ENCODE measurements at regions of chr9 and their contacts with region 1.

Region 1: DNA sequence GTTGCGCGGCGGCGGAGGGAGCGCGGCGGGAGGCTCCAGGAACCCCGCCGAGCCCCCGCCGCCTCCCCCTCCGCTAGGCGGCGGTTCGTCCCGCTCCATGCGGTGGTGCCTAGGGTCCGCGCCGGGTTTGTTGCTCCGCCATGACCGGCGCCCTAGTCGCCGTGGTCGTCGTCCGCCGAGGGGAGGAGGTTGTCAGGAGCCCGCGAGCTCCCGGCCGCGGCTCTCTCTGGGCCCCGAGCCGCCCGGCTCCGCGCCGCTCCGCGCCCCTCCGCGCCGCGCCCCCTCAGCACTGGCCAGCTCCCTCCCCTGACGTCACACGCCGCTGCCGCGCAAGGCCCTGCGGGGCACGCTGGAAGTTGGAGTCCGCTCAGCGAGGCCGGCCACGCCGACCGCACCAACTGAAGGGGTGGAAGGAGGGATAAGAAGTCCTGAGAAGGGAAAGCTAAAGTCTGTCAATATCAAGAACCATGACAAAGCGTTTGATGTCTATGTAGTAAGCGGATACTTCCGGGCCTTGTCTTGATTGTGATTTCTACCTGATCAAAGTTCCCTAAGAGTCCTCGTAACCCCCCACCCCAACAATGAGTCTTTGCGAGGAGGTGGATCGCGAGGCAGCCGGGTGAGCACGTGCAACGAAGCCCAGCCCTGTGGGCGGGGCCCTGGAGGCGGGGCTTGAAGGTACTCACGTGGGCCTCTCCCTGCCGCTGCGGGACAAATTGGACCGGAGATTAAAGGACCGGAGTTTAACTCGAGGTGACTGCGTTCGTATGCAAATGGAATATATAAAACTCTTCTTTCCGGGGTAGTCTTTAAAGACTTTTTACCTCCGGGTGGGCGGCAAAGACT is at the start of gene NR6A1:
- DNase-seq: peak; percentile 63
- H3K4me3 ChIP-seq: peak within 1 kb of the TSS; percentile 65
- CTCF ChIP-seq: peak; percentile 35

Region 2: GRCh38 chr9:124782661-124783574 is 11.7 kb after region 1 on chr9:
- CTCF ChIA-PET with region 1: interaction called, 88 read pairs
- POLR2A ChIA-PET with region 1: no interaction called
- DNase-seq: no peak
- H3K4me3 ChIP-seq: no peak overlapping the region
- CTCF ChIP-seq: no peak

Region 3: DNA sequence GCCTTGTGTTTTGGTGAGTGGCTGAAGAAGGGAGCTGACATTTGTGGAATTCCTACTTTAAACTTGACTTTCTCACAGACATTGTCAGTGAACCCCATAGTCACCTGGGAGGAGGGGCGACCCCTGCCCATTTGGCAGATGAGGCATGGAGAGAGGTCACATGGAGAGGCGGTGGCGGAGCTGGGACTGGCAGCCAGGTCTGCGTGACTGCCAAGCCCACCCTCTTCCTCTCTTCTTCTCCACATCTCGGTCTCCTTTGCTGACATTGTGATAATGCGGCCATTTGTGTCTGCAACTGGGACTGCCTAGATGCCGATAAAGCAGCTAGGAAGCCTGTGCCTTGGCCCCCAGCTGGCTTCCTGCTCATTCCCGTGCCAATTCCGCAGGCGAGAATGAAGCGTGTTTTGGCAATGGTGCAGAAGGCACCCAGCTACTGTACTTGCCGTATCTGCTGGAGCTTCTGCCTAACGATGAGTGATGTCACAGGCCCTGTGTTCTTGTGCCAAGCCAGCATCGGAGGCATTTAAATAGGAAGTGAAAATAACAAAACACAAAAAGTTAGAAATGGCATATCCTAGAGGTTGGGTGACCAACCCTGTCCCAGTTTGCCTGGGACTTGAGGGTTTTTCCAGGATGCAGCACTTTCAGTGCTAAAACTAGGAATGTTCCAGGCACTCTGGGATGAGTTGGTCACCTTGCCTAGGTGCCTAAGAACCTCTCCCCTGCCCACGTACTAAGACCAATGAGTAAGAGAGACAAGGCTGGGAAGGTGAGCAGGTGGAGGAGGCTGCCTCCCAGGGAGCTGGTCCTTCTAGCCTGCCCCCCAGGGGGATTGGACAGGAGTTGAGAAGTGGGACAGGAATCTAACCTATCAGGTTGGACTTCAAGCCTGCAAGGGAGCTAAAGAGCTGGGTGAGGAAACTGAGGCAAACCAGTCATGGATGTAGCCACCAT is 29.3 kb after region 1 on chr9:
- CTCF ChIA-PET with region 1: interaction called, 138 read pairs
- POLR2A ChIA-PET with region 1: no interaction called
- DNase-seq: no peak
- H3K4me3 ChIP-seq: no peak overlapping the region
- CTCF ChIP-seq: no peak

Region 4: GRCh38 chr9:124818431-124819281 is 47.4 kb after region 1 on chr9:
- CTCF ChIA-PET with region 1: interaction called, 85 read pairs
- POLR2A ChIA-PET with region 1: no interaction called
- DNase-seq: no peak
- H3K4me3 ChIP-seq: no peak overlapping the region
- CTCF ChIP-seq: no peak

Region 5: GRCh38 chr9:124884376-124884775 is 113.1 kb after region 1 on chr9:
- CTCF ChIA-PET with region 1: interaction called, 16 read pairs
- POLR2A ChIA-PET with region 1: no interaction called
- DNase-seq: no peak
- H3K4me3 ChIP-seq: no peak overlapping the region
- CTCF ChIP-seq: no peak

Region 6: DNA sequence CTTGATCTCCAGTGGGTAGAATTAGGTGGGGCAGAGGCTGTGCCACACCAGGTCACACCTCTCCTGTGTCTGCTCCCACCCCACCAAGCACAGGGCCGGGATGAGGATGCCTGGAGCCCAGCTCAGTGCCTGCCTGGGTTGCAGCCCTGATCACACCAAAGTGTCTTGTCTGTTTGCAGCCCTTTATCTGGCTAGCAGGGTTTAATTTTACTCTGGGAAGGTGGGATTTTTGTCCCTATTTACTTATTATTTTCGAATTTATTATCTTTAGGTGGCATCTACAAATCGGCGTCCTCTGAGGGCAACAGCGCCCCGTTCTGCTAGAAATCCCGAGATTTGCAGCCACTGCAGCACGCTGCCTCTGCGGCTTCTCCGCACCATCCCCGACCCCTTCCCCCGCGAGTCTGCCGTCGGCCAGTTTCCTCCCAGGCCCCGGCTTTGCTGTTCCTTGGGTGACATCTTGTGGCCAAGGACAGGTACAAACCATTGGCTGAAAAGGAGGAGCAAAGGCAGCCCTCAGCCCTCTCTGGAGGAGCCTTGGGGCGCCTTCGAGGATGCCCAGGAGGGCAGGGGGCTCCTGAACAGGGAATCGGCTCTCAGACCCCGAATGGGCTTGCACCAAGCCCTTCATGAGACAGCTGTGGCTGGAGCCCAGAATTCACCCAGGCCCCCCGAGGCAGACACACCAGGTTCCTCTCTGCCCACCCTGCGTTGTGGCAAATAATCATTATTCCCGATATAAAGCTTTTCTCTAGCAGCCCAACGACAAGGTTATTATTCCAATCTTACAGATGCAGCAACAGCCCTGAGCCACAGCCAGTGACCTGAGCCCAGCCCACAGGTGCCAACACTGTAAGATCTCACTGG is 603.4 kb after region 1 on chr9:
- CTCF ChIA-PET with region 1: interaction called, 83 read pairs
- POLR2A ChIA-PET with region 1: no interaction called
- DNase-seq: no peak
- H3K4me3 ChIP-seq: peak overlapping the region; percentile 50
- CTCF ChIP-seq: peak; percentile 84

Measured in AG04449 (cell line).